Dorsolateral prefrontal cortex (tissue), 120 donors: ENCODE measurements at regions of chr19 and their contacts with region 1.

Region 1: DNA sequence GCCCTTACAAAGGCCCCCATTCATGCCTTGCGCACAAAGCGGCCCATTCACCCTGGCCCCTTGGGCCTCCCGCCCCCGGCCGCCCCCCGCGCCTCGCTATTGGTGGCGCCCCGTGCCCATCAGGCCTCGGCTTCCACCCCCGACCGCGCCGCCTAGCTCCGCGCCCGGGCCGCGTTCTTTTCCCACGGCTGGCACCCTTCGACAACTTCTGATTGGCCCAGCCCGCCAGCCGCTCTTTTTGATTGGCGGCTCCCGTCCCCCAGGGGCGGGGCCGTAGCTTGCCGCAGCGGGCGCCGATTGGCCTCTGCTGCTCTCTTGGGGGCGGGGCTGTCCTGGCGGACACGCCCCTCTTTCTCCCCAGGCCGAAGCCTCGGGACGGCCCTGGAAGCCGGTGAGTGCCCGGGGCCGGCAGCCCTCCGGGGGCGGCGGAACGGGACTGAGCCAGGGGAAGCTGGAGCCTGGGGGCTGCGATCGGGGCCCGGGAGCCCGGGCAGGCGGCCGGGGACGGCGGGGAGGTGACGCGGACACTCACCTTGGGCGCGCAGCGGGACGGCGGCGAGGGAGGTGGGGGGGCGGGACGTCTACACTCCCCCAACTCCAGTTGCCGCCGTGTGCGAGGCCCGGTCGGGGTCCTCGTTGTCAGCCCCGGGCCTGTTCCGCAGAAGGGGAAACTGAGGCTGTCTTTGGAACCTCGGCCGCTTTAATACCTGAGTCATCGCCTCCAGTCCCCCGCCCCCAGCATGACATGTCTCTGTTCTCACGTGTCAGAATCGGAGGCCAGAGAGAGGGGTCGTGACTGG is at the start of gene MYH14:
- DNase-seq: peak; percentile 90 to 99 (median 95)
- H3K4me3 ChIP-seq: peak within 1 kb of the TSS; percentile 60 to 92 (median 77)
- H3K27ac ChIP-seq: peak within 1 kb of the TSS in 58 of 59 donors; percentile 56 to 97 (median 89)
- H3K27me3 ChIP-seq: peaks cover 0 to 16% (median 0%) of the 10 kb centered on the region in 45 donors
- CTCF ChIP-seq: peak in 23 of 56 donors; percentile 10 to 57 (median 31)
- total RNA-seq, gene MYH14: 23.9 to 74.2 (median 42.8) TPM

Region 2: DNA sequence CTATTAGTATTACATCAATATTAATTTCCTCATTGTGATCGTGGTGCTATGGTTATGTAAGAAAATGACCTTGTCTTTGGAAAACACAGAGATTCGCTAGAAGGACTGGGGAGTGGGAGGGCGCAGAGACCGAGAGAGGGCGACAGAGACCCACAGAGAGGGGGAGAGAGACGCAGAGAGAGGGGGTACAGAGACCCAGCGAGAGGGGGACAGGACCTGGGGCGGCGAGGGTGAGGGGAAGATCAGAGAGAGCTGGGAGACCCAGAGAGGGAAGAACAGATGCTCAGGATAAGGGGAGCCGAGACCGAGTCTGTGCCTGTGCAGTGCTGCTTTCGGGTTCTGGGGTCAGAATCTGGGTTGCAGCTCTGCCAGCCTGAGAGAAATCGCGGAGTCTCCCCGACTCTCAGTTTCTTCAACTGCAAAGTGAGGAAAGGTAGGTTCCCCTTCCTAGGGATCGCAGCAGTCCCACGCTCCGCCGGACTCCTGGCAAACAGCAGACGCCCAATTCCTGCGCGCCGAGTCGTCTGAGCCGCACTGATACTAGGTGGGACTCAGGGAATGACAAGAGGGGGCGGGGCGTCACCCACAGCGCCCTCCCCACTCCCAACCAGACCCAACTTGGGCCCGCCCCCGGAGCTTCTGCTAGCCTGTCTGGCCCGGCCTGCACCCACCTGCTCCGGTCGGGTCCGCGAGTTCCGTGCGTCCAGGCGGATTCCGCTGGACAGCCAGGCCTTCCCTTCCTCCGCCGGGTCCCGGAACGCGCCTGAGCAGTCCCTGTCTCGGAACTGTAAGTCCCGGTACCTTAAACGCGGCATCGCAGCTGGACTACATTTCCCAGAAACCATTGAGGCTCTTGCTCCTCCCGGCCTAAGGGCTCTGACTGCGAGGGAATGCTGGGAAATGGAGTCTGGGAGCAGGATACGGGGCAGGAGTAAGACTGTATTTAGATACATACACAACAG is 55.7 kb before region 1 on chr19:
- intact Hi-C with region 1: loop called in 1 of 2 experiments (anchors 10 kb)
- DNase-seq: peak; percentile 75 to 96 (median 90)
- H3K4me3 ChIP-seq: peak overlapping the region; percentile 56 to 100 (median 77)
- H3K27ac ChIP-seq: peak overlapping the region; percentile 23 to 96 (median 84)
- H3K27me3 ChIP-seq: no peaks in the 10 kb centered on the region
- CTCF ChIP-seq: peak in 54 of 56 donors; percentile 19 to 70 (median 50)

Region 3: DNA sequence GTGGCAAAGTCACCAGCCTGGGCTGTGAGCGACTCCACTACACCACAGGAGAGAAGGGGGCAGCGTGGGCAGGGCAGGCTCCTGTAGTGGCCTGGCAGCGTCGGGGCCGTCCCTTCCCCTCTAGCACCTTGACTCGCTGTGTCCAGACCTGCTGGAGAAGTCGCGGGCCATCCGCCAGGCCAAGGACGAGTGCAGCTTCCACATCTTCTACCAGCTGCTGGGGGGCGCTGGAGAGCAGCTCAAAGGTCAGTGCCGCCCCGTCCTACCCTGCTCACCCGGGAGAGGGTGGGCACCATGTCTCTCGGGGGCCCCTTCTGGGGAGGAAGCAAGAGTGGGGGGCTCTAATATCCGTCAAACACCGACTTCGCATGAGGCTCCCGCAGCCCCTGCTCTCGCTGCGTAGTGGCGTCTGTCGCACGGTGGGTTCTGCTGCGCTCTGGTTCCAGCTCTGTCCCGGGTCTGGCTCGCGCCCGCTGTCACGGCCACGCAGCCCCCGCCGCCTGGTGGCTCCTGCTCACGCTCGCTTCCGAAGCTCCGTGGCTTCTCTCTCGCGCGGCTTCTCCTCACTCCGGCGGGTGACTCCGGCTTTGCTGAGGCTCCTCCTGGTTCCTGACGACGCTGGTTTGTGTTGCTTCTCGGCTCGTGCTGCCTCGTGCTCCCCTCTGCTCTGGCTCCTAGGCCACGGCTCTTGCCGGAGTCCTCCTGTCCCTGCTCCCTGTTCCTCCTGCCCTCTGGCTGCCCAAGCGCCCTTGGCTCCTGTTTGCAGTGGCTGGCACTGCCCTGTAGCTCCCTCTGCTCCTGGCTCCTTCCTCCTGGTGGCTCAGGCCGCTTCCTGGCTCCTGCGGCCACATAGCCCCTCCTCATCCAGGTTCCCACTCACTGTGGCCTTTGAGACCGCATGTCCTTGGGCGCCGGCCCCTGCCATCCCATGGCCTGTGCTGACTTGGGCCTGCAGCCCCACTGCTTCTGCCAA is 27.2 kb after region 1 on chr19:
- intact Hi-C with region 1: loop called in 1 of 2 experiments (anchors 2 kb)
- DNase-seq: no peak
- H3K4me3 ChIP-seq: peak overlapping the region in 1 of 59 donors; percentile 10
- H3K27ac ChIP-seq: no peak overlapping the region
- H3K27me3 ChIP-seq: no peaks in the 10 kb centered on the region
- CTCF ChIP-seq: no peak

Region 4: DNA sequence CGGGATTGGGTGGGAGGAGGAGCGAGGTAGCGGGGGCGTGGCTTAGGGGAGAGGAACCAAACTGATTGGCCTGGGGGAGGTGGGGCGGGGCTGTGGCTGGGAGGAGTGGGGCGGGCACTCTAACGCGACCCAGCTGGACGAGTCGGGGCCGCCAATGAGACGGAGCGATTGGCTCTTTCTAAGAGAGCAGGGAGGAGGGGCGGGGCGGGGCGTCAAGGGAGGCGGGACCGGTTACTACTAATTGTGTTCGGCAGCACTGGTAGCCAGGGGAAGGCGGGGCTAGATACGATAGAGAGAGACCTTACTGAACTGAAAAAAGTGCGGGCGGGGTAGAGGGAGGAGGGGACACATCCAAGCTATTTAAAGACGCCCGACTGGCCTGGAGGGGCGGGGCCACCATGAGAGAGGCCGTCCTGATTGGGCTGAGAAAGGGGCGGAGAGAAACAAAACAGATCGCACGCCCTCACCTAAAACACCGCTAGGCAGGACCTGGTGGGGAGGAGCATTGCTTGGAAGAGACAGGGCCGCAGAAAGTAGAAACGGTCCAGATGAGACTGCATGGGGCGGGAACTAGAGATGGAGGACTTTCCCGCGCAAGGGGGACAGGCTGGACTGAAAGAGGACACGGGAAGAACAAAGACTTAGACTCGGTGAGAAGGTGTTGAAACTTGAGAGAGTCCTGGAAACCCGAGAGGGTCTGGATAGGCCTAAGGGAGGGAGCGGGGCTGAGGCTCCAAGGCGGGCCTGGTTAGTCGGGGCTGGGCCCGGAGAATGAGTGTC is 125.9 kb after region 1 on chr19 and contains the start of gene KCNC3:
- intact Hi-C with region 1: loop called in 1 of 2 experiments (anchors 2 kb)
- DNase-seq: peak; percentile 97 to 100 (median 100)
- H3K4me3 ChIP-seq: peak within 1 kb of the TSS; percentile 39 to 84 (median 58)
- H3K27ac ChIP-seq: peak within 1 kb of the TSS in 58 of 59 donors; percentile 38 to 93 (median 82)
- H3K27me3 ChIP-seq: no peaks in the 10 kb centered on the region
- CTCF ChIP-seq: peak in 17 of 56 donors; percentile 5 to 50 (median 20)
- total RNA-seq, gene KCNC3: 15.1 to 99.8 (median 56.4) TPM

Region 5: DNA sequence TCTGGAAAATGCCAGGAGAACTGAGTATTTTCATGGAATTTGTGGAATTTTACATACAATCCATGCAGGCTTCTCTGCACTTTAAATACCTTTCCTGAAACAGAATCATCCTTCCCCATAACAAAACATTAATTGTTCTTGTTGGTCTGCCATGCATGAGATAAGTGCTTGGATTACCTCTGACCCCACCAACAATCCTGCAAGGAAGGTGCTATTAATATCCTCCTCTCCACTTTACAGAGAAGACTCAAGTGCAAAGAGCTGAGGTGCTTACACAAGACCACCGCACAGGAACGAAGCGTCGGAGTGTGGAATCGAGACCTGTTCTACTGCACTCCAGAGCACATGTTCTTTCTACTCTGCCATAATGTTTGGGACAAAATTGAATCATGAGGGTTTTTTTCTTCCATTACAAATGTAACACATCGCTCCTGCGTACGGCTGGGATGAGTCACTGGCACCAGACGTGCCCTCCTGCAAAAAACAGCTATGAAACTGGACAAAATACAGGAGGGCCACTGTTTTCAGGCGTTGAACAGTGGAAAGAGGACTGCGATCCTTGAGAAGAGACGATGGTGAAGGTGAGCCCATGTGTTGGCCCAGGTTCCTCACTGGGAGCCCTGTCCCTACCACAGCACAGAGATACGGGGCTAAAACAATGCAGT is 377.6 kb after region 1 on chr19:
- intact Hi-C with region 1: no loop called
- DNase-seq: no peak
- H3K4me3 ChIP-seq: no peak overlapping the region
- H3K27ac ChIP-seq: no peak overlapping the region
- H3K27me3 ChIP-seq: no peaks in the 10 kb centered on the region
- CTCF ChIP-seq: no peak